T-cell (primary cell): ENCODE measurements at regions of chr1 and their contacts with region 1.

Region 1: GRCh38 chr1:111222308-111223125 is 5.0 kb upstream of the CHI3L2 start:
- DNase-seq: peak in 34 of 35 experiments; percentile 32 to 89 (median 66)
- ATAC-seq: peak; percentile 27 to 41 (median 34)
- H3K4me3 ChIP-seq: peak overlapping the region; percentile 37 to 39
- H3K4me3 Mint-ChIP-seq: peak overlapping the region; percentile 71 to 81 (median 73)
- H3K27ac ChIP-seq: peak overlapping the region; percentile 87
- H3K27ac Mint-ChIP-seq: peak overlapping the region; percentile 95 to 96
- H3K4me1 ChIP-seq: peaks cover 88 to 89% of the 10 kb centered on the region in 2 experiments
- H3K4me1 Mint-ChIP-seq: peaks cover 94 to 100% (median 94%) of the 10 kb centered on the region in 3 donors
- H3K27me3 ChIP-seq: no peaks in the 10 kb centered on the region
- H3K27me3 Mint-ChIP-seq: no peaks in the 10 kb centered on the region

Region 2: GRCh38 chr1:110948038-110948810 is 274.3 kb before region 1 on chr1:
- CTCF ChIA-PET with region 1: no interaction called
- POLR2A ChIA-PET with region 1: no interaction called
- DNase-seq: no peak
- ATAC-seq: no peak
- H3K4me3 ChIP-seq: no peak overlapping the region
- H3K4me3 Mint-ChIP-seq: no peak overlapping the region
- H3K27ac ChIP-seq: no peak overlapping the region
- H3K27ac Mint-ChIP-seq: no peak overlapping the region
- H3K4me1 ChIP-seq: no peaks in the 10 kb centered on the region
- H3K4me1 Mint-ChIP-seq: no peaks in the 10 kb centered on the region
- H3K27me3 ChIP-seq: no peaks in the 10 kb centered on the region
- H3K27me3 Mint-ChIP-seq: no peaks in the 10 kb centered on the region

Region 3: GRCh38 chr1:111148376-111148881 is 74.1 kb before region 1 on chr1:
- CTCF ChIA-PET with region 1: no interaction called
- POLR2A ChIA-PET with region 1: no interaction called
- DNase-seq: no peak
- ATAC-seq: no peak
- H3K4me3 ChIP-seq: no peak overlapping the region
- H3K4me3 Mint-ChIP-seq: no peak overlapping the region
- H3K27ac ChIP-seq: no peak overlapping the region
- H3K27ac Mint-ChIP-seq: peak overlapping the region in 1 of 2 donors; percentile 1
- H3K4me1 ChIP-seq: peaks cover 4 to 10% of the 10 kb centered on the region in 2 experiments
- H3K4me1 Mint-ChIP-seq: peaks cover 80 to 82% (median 81%) of the 10 kb centered on the region in 3 donors
- H3K27me3 ChIP-seq: no peaks in the 10 kb centered on the region
- H3K27me3 Mint-ChIP-seq: no peaks in the 10 kb centered on the region

Region 4: DNA sequence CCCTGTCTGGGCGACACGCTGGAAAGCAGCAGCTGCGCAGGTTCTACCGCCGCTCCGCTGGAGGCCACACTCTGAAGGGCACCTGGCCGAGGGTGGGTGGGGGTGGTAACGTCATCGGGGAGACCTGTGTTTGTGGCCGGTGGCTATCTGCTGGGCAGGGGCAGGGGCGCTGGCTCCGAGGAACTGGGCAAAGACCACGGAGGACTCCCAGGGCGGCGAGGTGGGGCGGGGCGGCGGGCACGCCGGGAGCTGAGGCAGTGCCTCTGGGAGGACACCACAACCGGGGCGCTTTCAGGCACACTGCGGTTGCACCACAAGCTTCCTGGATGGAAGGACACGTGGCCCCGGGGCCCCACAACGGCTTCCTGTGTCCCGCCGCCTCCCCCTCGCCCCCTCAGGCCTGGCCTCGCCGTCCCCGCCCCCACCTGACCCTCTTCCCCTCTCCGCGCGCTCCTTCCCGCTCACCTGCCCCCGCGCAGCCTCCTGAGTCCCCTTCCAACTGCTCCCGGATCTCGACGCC is 18.8 kb before region 1 on chr1:
- CTCF ChIA-PET with region 1: interaction called, 4 to 50 read pairs
- POLR2A ChIA-PET with region 1: interaction called, 3 to 9 read pairs
- DNase-seq: peak; percentile 66 to 88 (median 78)
- ATAC-seq: peak; percentile 57 to 70 (median 68)
- H3K4me3 ChIP-seq: peak overlapping the region; percentile 68 to 81
- H3K4me3 Mint-ChIP-seq: peak overlapping the region; percentile 98 to 99 (median 99)
- H3K27ac ChIP-seq: peak overlapping the region; percentile 76
- H3K27ac Mint-ChIP-seq: peak overlapping the region; percentile 95 to 99
- H3K4me1 ChIP-seq: peaks cover 41 to 44% of the 10 kb centered on the region in 2 experiments
- H3K4me1 Mint-ChIP-seq: peaks cover 73 to 76% (median 74%) of the 10 kb centered on the region in 3 donors
- H3K27me3 ChIP-seq: no peaks in the 10 kb centered on the region
- H3K27me3 Mint-ChIP-seq: no peaks in the 10 kb centered on the region